ENCODE measurements at regions of chr11 and their contacts with region 1.

Region 1: DNA sequence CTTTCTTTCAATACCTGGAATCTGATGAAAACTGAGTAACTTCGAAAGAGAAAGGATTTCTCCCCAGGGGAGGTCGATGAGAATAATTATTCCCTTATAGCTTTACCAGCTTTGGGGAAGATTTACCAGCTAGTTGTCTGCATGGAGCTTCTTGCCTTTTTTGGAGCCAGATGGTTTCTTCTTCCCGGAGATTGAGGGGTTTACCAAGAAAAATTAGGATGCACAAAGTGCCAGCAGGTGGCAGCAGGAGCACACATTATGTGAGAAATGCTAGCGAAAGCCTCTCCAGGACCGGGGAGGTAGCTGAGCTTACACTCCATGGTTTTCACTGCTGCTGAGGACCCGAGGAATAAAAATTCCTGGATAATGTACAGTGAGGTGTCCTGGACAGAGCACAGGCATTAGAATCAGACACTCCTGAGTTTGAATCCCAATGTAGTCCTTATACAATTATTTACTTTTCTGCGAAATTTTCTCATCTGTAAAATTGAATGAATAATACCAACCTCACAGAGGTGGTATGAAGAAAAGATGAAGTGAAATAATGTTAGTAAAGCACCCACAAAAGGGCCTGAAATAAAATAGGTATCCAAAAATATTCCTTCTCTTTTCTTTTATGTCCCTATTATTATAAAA is 46.0 kb upstream of the PARVA start:
- DNase-seq: peak; percentile 70
- H3K4me3 ChIP-seq: no peak overlapping the region
- H3K27ac ChIP-seq: no peak overlapping the region
- H3K4me1 ChIP-seq: peaks cover 11% of the 10 kb centered on the region
- H3K27me3 ChIP-seq: no peaks in the 10 kb centered on the region
- CTCF ChIP-seq: peak; percentile 69 to 81

Region 2: GRCh38 chr11:12207384-12208150 is 123.8 kb before region 1 on chr11:
- CTCF ChIA-PET with region 1: no interaction called
- dilution Hi-C with region 1: no loop called
- in situ Hi-C with region 1: no loop called
- intact Hi-C with region 1: no loop called
- DNase-seq: no peak
- H3K4me3 ChIP-seq: no peak overlapping the region
- H3K27ac ChIP-seq: no peak overlapping the region
- H3K4me1 ChIP-seq: peaks cover 18% of the 10 kb centered on the region
- H3K27me3 ChIP-seq: no peaks in the 10 kb centered on the region
- CTCF ChIP-seq: no peak

Region 3: DNA sequence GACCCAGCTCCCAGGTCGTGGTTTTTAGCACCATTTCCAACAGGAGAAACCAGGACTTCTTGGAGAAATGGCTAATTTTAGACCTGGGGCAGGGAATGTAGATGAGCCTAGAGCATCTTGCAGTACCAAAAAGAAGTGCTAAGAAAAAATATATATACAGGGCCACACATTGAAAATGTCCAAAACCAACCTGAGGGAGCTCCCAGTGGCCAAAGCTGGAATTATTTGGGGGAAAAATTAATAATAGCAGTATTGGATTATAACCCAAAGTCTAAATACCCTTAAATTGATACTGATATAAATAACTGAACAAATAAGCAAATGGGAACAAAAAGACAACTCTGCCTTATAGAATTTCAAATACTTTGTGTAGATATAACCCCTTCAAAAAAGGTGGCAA is 154.0 kb after region 1 on chr11:
- CTCF ChIA-PET with region 1: no interaction called
- dilution Hi-C with region 1: no loop called
- in situ Hi-C with region 1: no loop called
- intact Hi-C with region 1: loop called (anchors 5 kb)
- DNase-seq: no peak
- H3K4me3 ChIP-seq: no peak overlapping the region
- H3K27ac ChIP-seq: no peak overlapping the region
- H3K4me1 ChIP-seq: no peaks in the 10 kb centered on the region
- H3K27me3 ChIP-seq: no peaks in the 10 kb centered on the region
- CTCF ChIP-seq: peak; percentile 39 to 43

Region 4: DNA sequence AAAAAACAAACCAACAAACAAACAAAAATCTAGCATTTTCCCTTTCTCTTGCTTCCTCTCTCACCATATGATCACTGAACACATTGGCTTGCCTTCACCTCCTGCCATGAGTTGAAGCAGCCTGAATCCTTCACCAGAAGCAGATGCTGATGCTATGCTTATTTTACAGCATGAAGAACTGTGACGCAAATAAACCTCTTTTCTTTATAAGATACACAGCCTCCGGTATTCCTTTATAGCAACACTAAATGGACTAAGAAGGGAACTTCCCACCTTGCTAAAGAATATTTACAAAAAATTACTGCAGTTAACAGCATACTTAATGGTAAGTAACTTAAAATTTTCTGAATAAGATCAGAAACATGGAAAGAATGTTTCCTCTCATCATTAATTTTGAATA is 315.1 kb after region 1 on chr11:
- CTCF ChIA-PET with region 1: no interaction called
- dilution Hi-C with region 1: no loop called
- in situ Hi-C with region 1: no loop called
- intact Hi-C with region 1: no loop called
- DNase-seq: no peak
- H3K4me3 ChIP-seq: no peak overlapping the region
- H3K27ac ChIP-seq: no peak overlapping the region
- H3K4me1 ChIP-seq: no peaks in the 10 kb centered on the region
- H3K27me3 ChIP-seq: no peaks in the 10 kb centered on the region
- CTCF ChIP-seq: no peak

Region 5: DNA sequence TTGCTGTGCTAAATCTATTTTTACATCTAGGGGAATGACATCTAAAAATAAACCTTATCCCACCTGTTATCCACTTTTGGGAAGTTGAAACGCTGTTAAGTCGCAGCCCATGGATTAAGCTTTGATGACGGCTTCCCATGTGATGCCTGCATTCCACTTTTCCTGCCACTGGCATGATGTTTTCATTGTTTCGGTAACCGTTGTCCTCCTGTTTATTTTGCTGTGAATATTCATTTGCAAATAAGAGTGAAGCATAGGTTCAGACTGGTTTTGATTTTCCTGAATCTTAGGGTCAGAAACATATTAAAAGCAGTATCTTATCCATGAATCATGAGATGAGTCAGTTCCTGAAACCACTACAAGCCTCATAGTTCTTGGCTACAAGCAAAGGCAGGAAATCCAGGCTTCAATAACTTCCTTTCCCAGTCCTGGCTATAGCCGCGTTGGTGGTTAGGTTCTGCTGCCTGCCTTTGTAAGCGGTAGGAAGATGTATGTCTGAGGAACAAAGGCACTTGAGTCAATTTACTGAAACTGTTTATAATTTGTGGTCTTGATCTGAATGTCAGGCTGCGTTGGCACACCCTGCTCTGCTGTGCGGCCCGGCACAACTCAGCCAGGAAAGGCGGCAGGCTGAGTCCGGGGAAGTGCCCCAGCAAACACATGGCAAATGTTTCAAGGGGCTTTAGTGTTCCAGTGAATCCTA is 362.3 kb after region 1 on chr11:
- CTCF ChIA-PET with region 1: no interaction called
- dilution Hi-C with region 1: no loop called
- in situ Hi-C with region 1: no loop called
- intact Hi-C with region 1: loop called (anchors 5 kb)
- DNase-seq: peak; percentile 99
- H3K4me3 ChIP-seq: peak overlapping the region; percentile 25 to 26 (median 26)
- H3K27ac ChIP-seq: peak overlapping the region; percentile 98
- H3K4me1 ChIP-seq: peaks cover 79% of the 10 kb centered on the region
- H3K27me3 ChIP-seq: no peaks in the 10 kb centered on the region
- CTCF ChIP-seq: no peak

Region 6: GRCh38 chr11:12769834-12770345 is 438.5 kb after region 1 on chr11:
- CTCF ChIA-PET with region 1: no interaction called
- dilution Hi-C with region 1: no loop called
- in situ Hi-C with region 1: no loop called
- intact Hi-C with region 1: loop called (anchors 10 kb)
- DNase-seq: peak; percentile 81
- H3K4me3 ChIP-seq: no peak overlapping the region
- H3K27ac ChIP-seq: peak overlapping the region; percentile 86
- H3K4me1 ChIP-seq: peaks cover 39% of the 10 kb centered on the region
- H3K27me3 ChIP-seq: no peaks in the 10 kb centered on the region
- CTCF ChIP-seq: no peak

Region 7: GRCh38 chr11:12888525-12889158 is 557.3 kb after region 1 on chr11:
- CTCF ChIA-PET with region 1: interaction called, 4 read pairs
- dilution Hi-C with region 1: no loop called
- in situ Hi-C with region 1: loop called (anchors 5 to 25 kb)
- intact Hi-C with region 1: no loop called
- DNase-seq: peak; percentile 69
- H3K4me3 ChIP-seq: no peak overlapping the region
- H3K27ac ChIP-seq: no peak overlapping the region
- H3K4me1 ChIP-seq: peaks cover 16% of the 10 kb centered on the region
- H3K27me3 ChIP-seq: no peaks in the 10 kb centered on the region
- CTCF ChIP-seq: peak; percentile 69 to 77

Region 8: GRCh38 chr11:12893787-12894672 is 562.7 kb after region 1 on chr11:
- CTCF ChIA-PET with region 1: interaction called, 4 read pairs
- dilution Hi-C with region 1: no loop called
- in situ Hi-C with region 1: loop called (anchors 5 to 25 kb)
- intact Hi-C with region 1: loop called (anchors 1 kb)
- DNase-seq: peak; percentile 42
- H3K4me3 ChIP-seq: no peak overlapping the region
- H3K27ac ChIP-seq: no peak overlapping the region
- H3K4me1 ChIP-seq: peaks cover 18% of the 10 kb centered on the region
- H3K27me3 ChIP-seq: no peaks in the 10 kb centered on the region
- CTCF ChIP-seq: peak; percentile 83 to 91

Region 9: DNA sequence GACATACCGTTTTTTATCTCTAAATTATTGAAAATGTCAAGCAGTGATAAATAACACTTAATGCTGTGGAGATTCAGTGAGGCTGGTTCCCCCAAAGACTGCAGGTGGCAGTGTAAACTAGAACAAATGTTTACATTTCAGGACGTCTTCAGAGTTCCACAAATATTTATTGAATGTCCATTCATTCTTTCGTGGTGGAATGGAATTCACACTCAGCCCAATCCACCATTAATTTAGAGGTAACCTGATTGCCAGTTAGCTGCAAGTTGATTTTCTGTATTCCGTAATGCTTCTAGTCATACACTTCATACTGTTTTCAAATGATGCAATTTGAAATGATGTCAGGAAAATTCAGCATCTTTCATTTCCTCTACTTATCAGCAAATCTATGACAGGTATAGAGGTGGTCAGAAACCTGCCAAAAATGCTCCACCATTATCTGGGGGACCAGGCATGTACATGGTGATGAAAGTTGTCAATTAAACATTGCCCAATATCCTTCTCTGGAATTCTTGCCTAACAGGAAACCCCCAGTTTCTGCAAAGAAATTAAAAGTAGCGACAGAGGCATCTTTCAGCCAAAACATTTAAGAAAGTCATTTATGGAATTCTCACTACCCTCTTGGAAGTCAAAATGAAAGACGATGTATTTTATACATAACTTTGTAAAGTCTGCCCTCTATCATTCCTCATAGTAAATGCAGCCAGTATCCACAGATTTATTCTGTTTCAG is 851.9 kb after region 1 on chr11:
- CTCF ChIA-PET with region 1: no interaction called
- dilution Hi-C with region 1: no loop called
- in situ Hi-C with region 1: loop called in 1 of 2 experiments (anchors 25 kb)
- intact Hi-C with region 1: no loop called
- DNase-seq: peak; percentile 77
- H3K4me3 ChIP-seq: peak overlapping the region in 2 of 3 experiments; percentile 4 to 27
- H3K27ac ChIP-seq: peak overlapping the region; percentile 5
- H3K4me1 ChIP-seq: peaks cover 7% of the 10 kb centered on the region
- H3K27me3 ChIP-seq: no peaks in the 10 kb centered on the region
- CTCF ChIP-seq: peak; percentile 56 to 63